Caco-2 (cell line): ENCODE measurements at regions of chr3 and their contacts with region 1.

Region 1: GRCh38 chr3:179322286-179323196 is at the start of gene ZNF639:
- DNase-seq: peak; percentile 84 to 92
- H3K4me3 ChIP-seq: peak within 1 kb of the TSS; percentile 76
- H3K4me3 Mint-ChIP-seq: peak within 1 kb of the TSS; percentile 78
- H3K27ac Mint-ChIP-seq: peak within 1 kb of the TSS; percentile 48
- H3K4me1 ChIP-seq: peaks cover 5% of the 10 kb centered on the region; the same call in 1 of the 2 replicates
- H3K4me1 Mint-ChIP-seq: peaks cover 6% of the 10 kb centered on the region
- H3K27me3 ChIP-seq: no peaks in the 10 kb centered on the region
- H3K27me3 Mint-ChIP-seq: no peaks in the 10 kb centered on the region
- CTCF ChIP-seq: peak; percentile 67 to 86
- total RNA-seq, gene ZNF639: 28.6 TPM in 2 replicates

Region 2: DNA sequence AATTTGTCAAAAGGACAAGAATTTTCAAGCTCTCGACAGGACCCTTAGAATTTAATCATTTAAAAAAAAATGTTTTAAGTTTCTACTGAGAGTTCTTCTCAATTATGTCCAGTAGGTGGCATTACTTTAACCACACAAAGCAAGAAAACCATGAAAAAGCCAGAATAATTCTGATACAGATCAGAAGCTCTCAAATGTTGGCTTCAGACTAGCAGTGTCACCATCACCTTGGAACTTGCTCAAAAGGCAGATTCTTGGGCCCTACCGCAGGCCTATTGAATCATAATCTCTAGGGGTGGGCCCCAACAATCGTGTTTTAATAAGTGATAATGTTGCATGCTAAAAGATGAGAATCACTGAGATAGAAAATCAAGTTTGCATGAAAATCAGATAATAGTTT is 885.8 kb before region 1 on chr3:
- CTCF ChIA-PET with region 1: no interaction called
- POLR2A ChIA-PET with region 1: no interaction called
- intact Hi-C with region 1: loop called (anchors 10 kb)
- DNase-seq: no peak
- H3K4me3 ChIP-seq: no peak overlapping the region
- H3K4me3 Mint-ChIP-seq: no peak overlapping the region
- H3K27ac Mint-ChIP-seq: no peak overlapping the region
- H3K4me1 ChIP-seq: no peaks in the 10 kb centered on the region
- H3K4me1 Mint-ChIP-seq: no peaks in the 10 kb centered on the region
- H3K27me3 ChIP-seq: no peaks in the 10 kb centered on the region
- H3K27me3 Mint-ChIP-seq: no peaks in the 10 kb centered on the region
- CTCF ChIP-seq: peak; percentile 45 to 51

Region 3: DNA sequence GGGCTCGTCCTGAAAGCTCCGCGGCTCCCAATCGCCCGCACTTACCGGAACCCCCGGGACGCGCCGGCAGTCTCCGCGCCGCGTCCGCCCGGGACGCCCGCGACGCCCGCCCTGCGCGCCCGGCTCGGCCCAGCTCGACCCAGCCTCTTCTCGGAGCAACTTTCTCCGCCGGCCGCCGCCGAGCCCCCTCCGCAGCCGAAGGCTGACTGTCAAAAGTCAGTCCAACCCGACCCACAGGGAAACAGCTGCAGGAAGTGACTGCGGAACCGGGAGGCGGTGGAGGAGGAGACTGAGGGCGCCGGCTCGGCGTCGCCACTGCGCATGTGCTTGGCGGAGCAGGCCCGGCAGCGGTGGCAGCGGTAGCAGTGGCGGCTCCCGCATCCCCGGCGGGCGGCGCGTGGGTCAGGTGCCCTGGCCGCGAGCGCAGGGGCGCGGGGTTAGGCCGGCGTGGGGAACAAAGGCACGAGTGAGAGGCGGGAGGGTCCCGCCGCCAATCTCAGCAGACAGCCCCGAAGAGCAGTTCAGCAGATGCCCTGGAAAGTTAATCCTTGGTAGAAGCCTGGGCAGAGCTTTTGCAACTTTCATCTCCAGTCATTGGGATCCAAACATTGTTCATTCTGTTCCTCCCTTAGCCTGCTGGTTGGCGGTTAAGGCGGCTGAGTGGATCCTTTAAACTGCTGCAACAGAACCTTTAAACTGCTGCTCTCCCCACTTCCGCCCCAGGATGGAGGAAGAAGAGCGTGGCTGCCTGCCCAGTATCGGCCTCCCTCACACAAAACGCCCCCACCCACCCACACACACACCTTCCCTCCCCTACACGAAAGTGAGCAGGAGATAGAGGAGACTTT is 250.8 kb before region 1 on chr3 and contains the start of gene ZMAT3:
- CTCF ChIA-PET with region 1: interaction called, 6 read pairs
- POLR2A ChIA-PET with region 1: no interaction called
- intact Hi-C with region 1: loop called (anchors 1 kb)
- DNase-seq: peak; percentile 78 to 86
- H3K4me3 ChIP-seq: peak within 1 kb of the TSS; percentile 65
- H3K4me3 Mint-ChIP-seq: peak within 1 kb of the TSS; percentile 95
- H3K27ac Mint-ChIP-seq: no peak within 1 kb of the TSS
- H3K4me1 ChIP-seq: 0 out of 2 replicates have a peak, but pooled peaks cover 3% of the 10 kb centered on the region
- H3K4me1 Mint-ChIP-seq: no peaks in the 10 kb centered on the region
- H3K27me3 ChIP-seq: no peaks in the 10 kb centered on the region
- H3K27me3 Mint-ChIP-seq: no peaks in the 10 kb centered on the region
- CTCF ChIP-seq: no peak
- total RNA-seq, gene ZMAT3: 7.6 and 8.8 TPM in 2 replicates

Region 4: DNA sequence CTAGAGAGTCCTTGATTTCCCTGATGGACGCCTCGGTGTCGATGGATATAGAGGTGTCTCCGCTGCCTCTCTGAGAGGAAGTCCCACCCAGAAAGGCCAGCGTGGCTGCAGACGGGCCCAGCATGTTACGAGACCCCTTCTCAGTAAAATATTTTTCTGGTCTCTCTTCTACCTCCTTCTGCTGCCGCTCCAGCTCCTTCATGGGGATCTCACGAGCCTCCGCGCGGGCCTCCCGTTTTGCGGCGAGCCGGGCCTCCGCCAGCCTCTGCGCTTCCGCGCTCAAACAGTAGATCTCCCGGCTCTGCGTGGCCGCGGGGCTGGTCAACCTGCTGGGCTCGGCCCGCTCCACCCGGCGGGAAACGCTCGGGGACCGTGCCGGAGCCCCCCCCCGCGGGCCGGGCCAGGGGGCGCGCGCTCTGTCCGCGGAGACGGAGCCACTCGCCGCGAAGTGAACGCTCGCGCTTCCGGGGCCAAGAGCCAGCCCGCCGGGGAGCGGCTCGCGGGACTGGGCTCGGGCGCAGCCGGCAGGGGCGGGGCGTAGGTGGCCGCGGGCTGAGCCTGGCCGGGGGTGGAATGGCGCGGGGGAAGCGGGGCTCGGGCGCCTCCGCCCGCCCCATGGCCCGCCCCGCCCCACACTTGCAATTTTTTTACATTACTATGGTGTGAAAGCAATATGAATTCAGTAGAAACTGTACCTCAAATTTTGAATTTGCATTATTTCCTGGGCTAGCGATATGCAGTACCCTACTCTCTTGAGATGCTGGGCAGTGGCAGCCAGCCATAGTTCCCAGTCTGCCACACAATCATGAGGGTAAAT is 61.4 kb before region 1 on chr3:
- CTCF ChIA-PET with region 1: no interaction called
- POLR2A ChIA-PET with region 1: no interaction called
- intact Hi-C with region 1: loop called (anchors 2 kb)
- DNase-seq: peak; percentile 77 to 87
- H3K4me3 ChIP-seq: peak overlapping the region; percentile 66
- H3K4me3 Mint-ChIP-seq: peak overlapping the region; percentile 78
- H3K27ac Mint-ChIP-seq: peak overlapping the region; percentile 84
- H3K4me1 ChIP-seq: no peaks in the 10 kb centered on the region
- H3K4me1 Mint-ChIP-seq: peaks cover 29% of the 10 kb centered on the region
- H3K27me3 ChIP-seq: no peaks in the 10 kb centered on the region; the same call in 1 of the 2 replicates
- H3K27me3 Mint-ChIP-seq: no peaks in the 10 kb centered on the region
- CTCF ChIP-seq: no peak

Region 5: GRCh38 chr3:179562591-179563270 is 240.2 kb after region 1 on chr3 and contains the start of gene ACTL6A:
- CTCF ChIA-PET with region 1: no interaction called
- POLR2A ChIA-PET with region 1: interaction called, 3 read pairs
- intact Hi-C with region 1: loop called (anchors 1 kb)
- DNase-seq: peak; percentile 99 to 100
- H3K4me3 ChIP-seq: peak within 1 kb of the TSS; percentile 78
- H3K4me3 Mint-ChIP-seq: peak within 1 kb of the TSS; percentile 97
- H3K27ac Mint-ChIP-seq: peak within 1 kb of the TSS; percentile 96
- H3K4me1 ChIP-seq: peaks cover 5% of the 10 kb centered on the region; the same call in 1 of the 2 replicates
- H3K4me1 Mint-ChIP-seq: peaks cover 6% of the 10 kb centered on the region
- H3K27me3 ChIP-seq: no peaks in the 10 kb centered on the region
- H3K27me3 Mint-ChIP-seq: no peaks in the 10 kb centered on the region
- CTCF ChIP-seq: no peak
- total RNA-seq, gene ACTL6A: 75.0 and 89.2 TPM in 2 replicates